ENCODE measurements at regions of chr1 and their contacts with region 1.

Region 1: GRCh38 chr1:45815667-45816458 is 12.5 kb downstream of the MAST2 start:
- DNase-seq: no peak
- ATAC-seq: no peak
- H3K4me3 Mint-ChIP-seq: no peak overlapping the region
- H3K27ac Mint-ChIP-seq: no peak overlapping the region
- H3K4me1 Mint-ChIP-seq: peaks cover 16% of the 10 kb centered on the region
- H3K27me3 Mint-ChIP-seq: no peaks in the 10 kb centered on the region
- CTCF ChIP-seq: no peak

Region 2: GRCh38 chr1:45594412-45594811 is 221.5 kb before region 1 on chr1:
- CTCF ChIA-PET with region 1: no interaction called
- POLR2A ChIA-PET with region 1: no interaction called
- intact Hi-C with region 1: no loop called
- DNase-seq: no peak
- ATAC-seq: no peak
- H3K4me3 Mint-ChIP-seq: no peak overlapping the region
- H3K27ac Mint-ChIP-seq: no peak overlapping the region
- H3K4me1 Mint-ChIP-seq: peaks cover 17% of the 10 kb centered on the region
- H3K27me3 Mint-ChIP-seq: no peaks in the 10 kb centered on the region
- CTCF ChIP-seq: no peak

Region 3: GRCh38 chr1:45679123-45679522 is 136.7 kb before region 1 on chr1:
- CTCF ChIA-PET with region 1: no interaction called
- POLR2A ChIA-PET with region 1: interaction called, 11 read pairs
- intact Hi-C with region 1: no loop called
- DNase-seq: no peak
- ATAC-seq: no peak
- H3K4me3 Mint-ChIP-seq: no peak overlapping the region
- H3K27ac Mint-ChIP-seq: no peak overlapping the region
- H3K4me1 Mint-ChIP-seq: peaks cover 77% of the 10 kb centered on the region
- H3K27me3 Mint-ChIP-seq: no peaks in the 10 kb centered on the region
- CTCF ChIP-seq: no peak

Region 4: DNA sequence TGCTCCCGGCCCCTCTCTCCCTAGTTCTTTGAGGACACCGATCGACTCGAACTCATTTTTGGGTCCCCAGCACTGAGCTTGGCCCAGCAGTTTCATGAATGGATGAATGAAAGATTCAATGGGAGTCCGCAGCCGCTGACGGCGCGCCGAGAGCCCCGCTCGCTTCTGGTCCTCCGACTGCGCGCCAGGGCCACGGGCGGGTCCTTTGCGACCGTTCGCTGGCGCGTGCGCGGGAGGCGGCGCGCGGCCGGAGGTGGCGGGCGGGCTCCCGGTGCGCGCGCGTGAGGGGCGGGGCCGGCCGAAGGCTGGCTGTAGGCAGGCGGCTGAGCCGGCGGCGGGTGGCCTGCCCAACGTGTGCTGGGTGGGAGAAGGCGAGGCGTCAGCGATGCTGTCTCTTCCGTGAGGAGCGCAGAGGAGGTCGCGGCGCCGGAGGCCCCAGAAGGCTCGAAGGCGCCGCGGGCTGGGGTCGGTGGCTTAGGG is 12.5 kb before region 1 on chr1 and contains the start of gene MAST2:
- CTCF ChIA-PET with region 1: no interaction called
- POLR2A ChIA-PET with region 1: interaction called, 4 read pairs
- intact Hi-C with region 1: loop called (anchors 2 kb)
- DNase-seq: peak; percentile 91
- ATAC-seq: peak; percentile 96
- H3K4me3 Mint-ChIP-seq: peak within 1 kb of the TSS; percentile 92
- H3K27ac Mint-ChIP-seq: peak within 1 kb of the TSS; percentile 69
- H3K4me1 Mint-ChIP-seq: peaks cover 18% of the 10 kb centered on the region
- H3K27me3 Mint-ChIP-seq: no peaks in the 10 kb centered on the region
- CTCF ChIP-seq: no peak
- total RNA-seq, gene MAST2: 16.2 and 20.9 TPM in 2 replicates

Region 5: DNA sequence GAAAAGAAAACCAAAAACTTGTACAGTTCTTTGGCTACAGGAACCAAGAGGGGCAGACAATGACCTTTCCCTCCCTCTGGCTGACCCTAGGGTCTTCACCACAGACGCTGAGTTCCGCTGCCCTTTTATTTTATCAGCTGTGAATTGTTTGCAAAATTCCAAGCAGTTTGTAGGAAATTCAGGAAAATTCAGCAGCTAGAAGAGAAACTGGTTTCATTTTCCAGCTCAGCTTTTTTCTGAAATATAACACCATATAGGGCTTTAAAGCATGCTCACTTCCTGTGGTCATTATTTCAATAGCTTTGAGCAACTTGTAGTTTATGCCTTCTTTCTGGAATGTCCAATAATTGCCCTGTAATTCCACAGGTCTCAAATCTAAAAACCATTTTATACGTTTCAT is 322.1 kb after region 1 on chr1:
- CTCF ChIA-PET with region 1: no interaction called
- POLR2A ChIA-PET with region 1: interaction called, 10 read pairs
- intact Hi-C with region 1: no loop called
- DNase-seq: no peak
- ATAC-seq: no peak
- H3K4me3 Mint-ChIP-seq: no peak overlapping the region
- H3K27ac Mint-ChIP-seq: no peak overlapping the region
- H3K4me1 Mint-ChIP-seq: peaks cover 12% of the 10 kb centered on the region
- H3K27me3 Mint-ChIP-seq: peaks cover 20% of the 10 kb centered on the region
- CTCF ChIP-seq: no peak

Measured in activated B cell treated with CpG ODN at 0.5 μM for 24 hours (primary cell).